A549 (cell line): ENCODE measurements at regions of chr9 and their contacts with region 1.

Region 1: DNA sequence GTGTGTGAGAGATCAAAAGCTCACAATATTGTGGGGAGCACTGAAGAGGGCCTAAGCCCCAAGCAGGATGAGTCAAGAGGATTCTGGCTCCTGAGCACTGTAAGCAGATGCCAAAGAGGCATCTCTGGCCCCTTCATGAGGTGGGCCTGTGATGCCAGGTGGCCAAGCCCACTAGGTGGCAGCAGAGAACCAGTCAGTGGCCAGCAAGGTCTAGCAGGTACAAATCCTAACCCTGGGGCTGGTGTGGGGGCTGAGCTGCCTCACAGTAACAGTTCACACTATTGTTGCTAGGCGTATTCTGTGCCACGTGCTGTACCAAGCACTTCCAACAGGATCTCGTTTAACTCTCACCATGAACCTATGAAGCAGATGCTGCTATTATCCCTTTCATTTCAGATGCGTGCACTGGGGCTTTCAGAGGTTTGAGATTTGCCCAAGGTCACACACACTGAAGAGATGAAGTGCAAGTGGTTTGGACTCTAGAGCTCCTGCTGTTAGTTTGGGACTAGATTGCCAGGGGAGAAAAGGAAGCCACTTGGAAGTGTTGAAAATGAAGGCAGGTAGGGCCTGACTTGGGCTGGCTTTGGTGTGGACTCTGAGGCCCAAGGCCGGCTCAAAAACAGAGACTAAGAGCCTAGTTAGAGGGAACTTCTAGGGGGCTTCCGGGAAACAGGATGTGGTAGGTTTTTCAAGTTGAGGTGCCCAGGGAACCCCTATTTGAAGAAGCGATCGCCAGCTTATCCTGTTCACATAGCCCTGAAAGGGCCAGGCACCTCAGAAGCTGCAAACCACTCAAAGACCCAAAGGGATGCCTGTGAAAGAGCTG is 4.4 kb upstream of the MLANA start:
- DNase-seq: peak; percentile 72 to 82
- ATAC-seq: peak; percentile 96 to 99
- H3K4me3 ChIP-seq: no peak overlapping the region
- H3K27ac ChIP-seq: peak overlapping the region in 1 of 2 experiments; percentile 62; a peak in 3 of 6 replicates
- H3K4me1 ChIP-seq: 0 out of 3 replicates have a peak, but pooled peaks cover 3% of the 10 kb centered on the region
- CTCF ChIP-seq: peak; percentile 92
- EP300 ChIP-seq: no peak
- POLR2A ChIP-seq: no peak
- RAD21 ChIP-seq: peak; percentile 95 to 96

Region 2: DNA sequence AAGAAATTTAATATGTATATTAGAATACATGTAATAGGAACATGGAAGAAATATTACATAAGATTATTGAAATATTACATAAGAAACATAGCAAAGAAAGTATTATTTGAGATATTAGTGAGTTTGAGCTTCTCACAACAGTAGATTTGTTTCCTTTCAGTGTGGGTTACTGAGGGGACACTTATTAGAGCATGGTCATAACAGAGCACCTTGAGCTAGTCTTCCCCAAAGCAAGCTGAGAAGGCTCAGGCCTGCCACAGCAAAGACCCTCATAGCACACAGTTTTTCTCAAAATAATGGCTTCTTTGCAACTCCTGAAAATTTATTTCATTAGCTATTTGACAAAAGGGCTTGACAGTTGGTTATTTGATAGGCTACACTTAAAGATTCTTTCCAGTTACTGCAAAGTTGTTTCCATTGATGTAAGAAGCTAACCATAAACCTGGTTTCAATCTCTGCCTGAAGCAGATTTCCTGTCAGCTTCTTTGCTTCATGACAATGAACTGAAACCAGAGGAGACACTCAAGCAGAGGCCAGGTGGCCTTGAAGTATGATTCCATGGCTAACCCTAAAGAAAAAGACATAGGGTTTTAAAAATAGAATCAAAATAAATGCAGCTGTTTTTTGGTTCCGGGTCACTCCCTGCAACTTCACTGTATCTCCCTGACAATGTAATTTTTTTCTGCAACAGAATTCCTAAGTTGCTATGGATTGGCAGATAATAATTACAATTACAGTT is 122.0 kb before region 1 on chr9:
- CTCF ChIA-PET with region 1: no interaction called
- POLR2A ChIA-PET with region 1: no interaction called
- DNase-seq: no peak
- ATAC-seq: no peak
- H3K4me3 ChIP-seq: no peak overlapping the region
- H3K27ac ChIP-seq: no peak overlapping the region
- H3K4me1 ChIP-seq: no peaks in the 10 kb centered on the region
- CTCF ChIP-seq: no peak
- EP300 ChIP-seq: no peak
- POLR2A ChIP-seq: no peak
- RAD21 ChIP-seq: no peak

Region 3: GRCh38 chr9:5799314-5799713 is 87.0 kb before region 1 on chr9:
- CTCF ChIA-PET with region 1: interaction called, 11 read pairs
- POLR2A ChIA-PET with region 1: interaction called, 3 read pairs
- DNase-seq: peak; percentile 41 to 73
- ATAC-seq: peak; percentile 74 to 87
- H3K4me3 ChIP-seq: no peak overlapping the region
- H3K27ac ChIP-seq: peak overlapping the region; percentile 8 to 38; a peak in 2 of 6 replicates
- H3K4me1 ChIP-seq: peaks cover 21% of the 10 kb centered on the region
- CTCF ChIP-seq: peak; percentile 97
- EP300 ChIP-seq: no peak
- POLR2A ChIP-seq: no peak
- RAD21 ChIP-seq: peak; percentile 91 to 94

Region 4: GRCh38 chr9:5843794-5844504 is 42.4 kb before region 1 on chr9:
- CTCF ChIA-PET with region 1: interaction called, 15 read pairs
- POLR2A ChIA-PET with region 1: no interaction called
- DNase-seq: peak; percentile 57 to 81
- ATAC-seq: peak; percentile 79 to 85
- H3K4me3 ChIP-seq: no peak overlapping the region
- H3K27ac ChIP-seq: peak overlapping the region; percentile 69 to 87
- H3K4me1 ChIP-seq: peaks cover 53% of the 10 kb centered on the region
- CTCF ChIP-seq: no peak
- EP300 ChIP-seq: no peak
- POLR2A ChIP-seq: no peak
- RAD21 ChIP-seq: no peak; a peak in 1 of 5 replicates

Region 5: DNA sequence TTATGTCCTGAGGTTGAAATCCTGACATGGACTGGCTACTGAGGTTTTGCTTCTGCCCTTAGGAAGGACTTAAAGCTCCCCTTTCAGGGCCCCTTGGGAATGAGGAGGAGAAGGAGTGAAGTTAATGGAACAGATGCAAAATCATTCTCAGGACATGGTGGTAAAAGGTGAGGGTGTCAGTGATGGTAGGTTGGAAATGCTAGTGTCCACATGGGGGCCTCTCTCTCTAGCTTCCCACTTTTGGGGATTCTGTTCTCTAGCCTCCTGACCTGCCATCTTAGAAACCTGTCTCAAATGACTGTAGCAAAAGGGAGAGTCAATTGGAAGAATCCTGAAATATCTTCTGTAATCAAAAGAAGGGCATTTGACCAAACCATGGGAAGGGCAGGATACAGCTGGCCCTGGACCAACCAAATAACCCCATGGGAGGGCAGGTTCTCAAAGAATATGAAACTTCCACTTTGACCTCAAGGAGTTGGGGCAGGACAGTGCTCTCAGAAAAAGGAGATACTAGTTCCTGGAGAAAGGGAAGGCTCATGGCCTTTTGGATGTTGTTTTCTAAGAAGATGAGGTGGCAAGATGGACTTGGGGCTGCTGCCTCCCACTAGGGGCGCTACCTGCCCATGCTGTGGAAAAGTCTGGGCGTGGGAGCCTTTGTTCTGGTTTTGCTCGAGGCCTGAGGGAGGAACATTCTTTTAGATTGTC is 16.9 kb before region 1 on chr9:
- CTCF ChIA-PET with region 1: interaction called, 64 read pairs
- POLR2A ChIA-PET with region 1: no interaction called
- DNase-seq: peak; percentile 53 to 56
- ATAC-seq: peak; percentile 43 to 87; a peak in 4 of 6 replicates
- H3K4me3 ChIP-seq: no peak overlapping the region
- H3K27ac ChIP-seq: 0 out of 6 replicates have a peak overlapping the region, but pooled peaks of 1 of the 2 experiments have one; percentile 13
- H3K4me1 ChIP-seq: no peaks in the 10 kb centered on the region
- CTCF ChIP-seq: 0 out of 3 replicates have a peak, but pooled peaks have one; percentile 12
- EP300 ChIP-seq: no peak
- POLR2A ChIP-seq: no peak
- RAD21 ChIP-seq: peak in 1 of 2 experiments; percentile 62; a peak in 2 of 5 replicates

Region 6: GRCh38 chr9:5917888-5918287 is 31.6 kb after region 1 on chr9:
- CTCF ChIA-PET with region 1: interaction called, 10 read pairs
- POLR2A ChIA-PET with region 1: no interaction called
- DNase-seq: no peak
- ATAC-seq: no peak
- H3K4me3 ChIP-seq: no peak overlapping the region
- H3K27ac ChIP-seq: no peak overlapping the region
- H3K4me1 ChIP-seq: no peaks in the 10 kb centered on the region
- CTCF ChIP-seq: no peak
- EP300 ChIP-seq: no peak
- POLR2A ChIP-seq: no peak
- RAD21 ChIP-seq: no peak

Region 7: GRCh38 chr9:6034954-6035353 is 148.6 kb after region 1 on chr9:
- CTCF ChIA-PET with region 1: interaction called, 12 read pairs
- POLR2A ChIA-PET with region 1: no interaction called
- DNase-seq: peak in 1 of 2 experiments; percentile 14
- ATAC-seq: peak; percentile 56 to 73
- H3K4me3 ChIP-seq: no peak overlapping the region
- H3K27ac ChIP-seq: no peak overlapping the region
- H3K4me1 ChIP-seq: no peaks in the 10 kb centered on the region
- CTCF ChIP-seq: no peak
- EP300 ChIP-seq: no peak
- POLR2A ChIP-seq: no peak
- RAD21 ChIP-seq: no peak

Region 8: GRCh38 chr9:6055213-6055612 is 168.9 kb after region 1 on chr9:
- CTCF ChIA-PET with region 1: interaction called, 63 read pairs
- POLR2A ChIA-PET with region 1: no interaction called
- DNase-seq: peak; percentile 49 to 91
- ATAC-seq: peak; percentile 91 to 92
- H3K4me3 ChIP-seq: no peak overlapping the region
- H3K27ac ChIP-seq: no peak overlapping the region
- H3K4me1 ChIP-seq: no peaks in the 10 kb centered on the region
- CTCF ChIP-seq: peak; percentile 86
- EP300 ChIP-seq: no peak
- POLR2A ChIP-seq: no peak
- RAD21 ChIP-seq: peak; percentile 93 to 94